Activated CD4-positive, alpha-beta T cell treated with anti-CD3 and anti-CD28 coated beads for 36 hours (primary cell): ENCODE measurements at regions of chrX and their contacts with region 1.

Region 1: DNA sequence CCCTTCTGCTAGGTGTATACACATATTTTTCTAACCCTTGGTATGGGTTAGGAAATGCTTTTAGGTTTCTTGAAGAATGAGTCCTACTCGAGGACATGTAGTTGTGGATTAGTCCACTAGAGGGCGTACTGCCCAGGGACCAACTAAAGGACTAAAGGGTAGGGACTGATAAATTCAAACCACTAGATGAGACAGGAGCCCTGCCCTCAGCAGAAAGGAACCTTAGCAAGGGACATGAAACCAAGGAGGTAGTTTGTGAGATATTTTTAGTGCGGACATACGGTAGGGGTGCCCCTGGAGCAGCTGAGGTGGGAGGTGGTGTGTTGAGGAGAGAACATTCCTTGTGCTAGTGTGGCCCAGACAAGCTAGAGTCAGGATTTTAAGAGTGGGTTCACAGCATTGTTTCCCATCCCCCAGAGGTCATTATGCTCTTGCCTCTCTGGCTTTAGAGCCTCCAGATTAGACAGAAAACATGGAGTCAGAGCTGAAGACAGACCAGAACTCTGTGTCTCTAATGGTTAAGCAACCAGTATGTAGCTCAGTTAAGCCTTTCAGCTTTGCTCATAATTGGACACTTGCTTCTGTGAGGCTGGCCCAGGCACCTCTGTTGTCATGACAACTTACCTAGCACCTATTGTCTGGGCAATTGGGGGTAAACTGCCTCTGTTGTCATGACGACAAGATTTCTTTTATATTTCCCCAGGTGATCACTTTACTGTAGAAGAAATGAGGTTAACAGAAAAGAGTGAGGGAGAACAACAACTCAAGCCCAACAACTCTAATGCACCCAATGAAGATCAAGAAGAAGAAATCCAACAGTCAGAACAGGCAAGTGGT is 1.0 kb downstream of the TMEM31 start:
- DNase-seq: peak; percentile 66
- ATAC-seq: peak; percentile 44
- H3K4me3 Mint-ChIP-seq: no peak overlapping the region
- H3K27ac Mint-ChIP-seq: no peak overlapping the region
- H3K4me1 Mint-ChIP-seq: no peaks in the 10 kb centered on the region
- H3K27me3 Mint-ChIP-seq: no peaks in the 10 kb centered on the region

Region 2: GRCh38 chrX:103774070-103774642 is 62.4 kb after region 1 on chrX:
- CTCF ChIA-PET with region 1: interaction called, 3 read pairs
- POLR2A ChIA-PET with region 1: no interaction called
- intact Hi-C with region 1: loop called in 1 of 2 experiments (anchors 2 kb)
- DNase-seq: no peak
- ATAC-seq: no peak
- H3K4me3 Mint-ChIP-seq: no peak overlapping the region
- H3K27ac Mint-ChIP-seq: no peak overlapping the region
- H3K4me1 Mint-ChIP-seq: no peaks in the 10 kb centered on the region
- H3K27me3 Mint-ChIP-seq: peaks cover 10% of the 10 kb centered on the region

Region 3: DNA sequence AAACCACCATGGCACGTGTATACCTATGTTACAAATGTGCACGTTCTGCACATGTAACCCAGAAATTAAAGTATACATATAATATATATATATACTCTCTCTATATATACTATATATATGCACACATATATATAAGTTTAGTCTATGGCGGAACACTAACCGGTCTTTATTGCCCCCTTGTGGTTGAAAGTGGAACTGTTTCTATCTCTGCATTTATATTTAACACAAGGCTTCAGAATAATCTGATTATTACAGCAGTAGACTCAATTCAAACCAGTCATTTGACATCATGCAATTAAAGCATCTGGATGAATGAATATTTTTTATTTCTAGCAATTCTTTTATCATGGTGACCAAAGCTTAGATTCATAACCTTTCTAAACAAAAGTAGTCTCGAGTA is 105.8 kb after region 1 on chrX:
- CTCF ChIA-PET with region 1: interaction called, 6 read pairs
- POLR2A ChIA-PET with region 1: no interaction called
- intact Hi-C with region 1: loop called (anchors 1 kb)
- DNase-seq: no peak
- ATAC-seq: peak; percentile 63
- H3K4me3 Mint-ChIP-seq: no peak overlapping the region
- H3K27ac Mint-ChIP-seq: no peak overlapping the region
- H3K4me1 Mint-ChIP-seq: no peaks in the 10 kb centered on the region
- H3K27me3 Mint-ChIP-seq: peaks cover 12% of the 10 kb centered on the region

Region 4: GRCh38 chrX:103918581-103919269 is 207.0 kb after region 1 on chrX:
- CTCF ChIA-PET with region 1: no interaction called
- POLR2A ChIA-PET with region 1: no interaction called
- intact Hi-C with region 1: no loop called
- DNase-seq: peak; percentile 82
- ATAC-seq: peak; percentile 89
- H3K4me3 Mint-ChIP-seq: peak overlapping the region; percentile 90
- H3K27ac Mint-ChIP-seq: peak overlapping the region; percentile 94
- H3K4me1 Mint-ChIP-seq: peaks cover 15% of the 10 kb centered on the region
- H3K27me3 Mint-ChIP-seq: no peaks in the 10 kb centered on the region